Activated naive CD4-positive, alpha-beta T cell treated with anti-CD3 and anti-CD28 coated beads for 36 hours (primary cell): ENCODE measurements at regions of chr17 and their contacts with region 1.

Region 1: GRCh38 chr17:44503147-44504029 is at the start of gene GPATCH8:
- DNase-seq: peak; percentile 95
- H3K4me3 Mint-ChIP-seq: peak within 1 kb of the TSS; percentile 97
- H3K27ac Mint-ChIP-seq: peak within 1 kb of the TSS; percentile 93
- H3K4me1 Mint-ChIP-seq: peaks cover 32% of the 10 kb centered on the region
- H3K27me3 Mint-ChIP-seq: no peaks in the 10 kb centered on the region
- total RNA-seq, gene GPATCH8: 31.5 to 31.7 TPM

Region 2: DNA sequence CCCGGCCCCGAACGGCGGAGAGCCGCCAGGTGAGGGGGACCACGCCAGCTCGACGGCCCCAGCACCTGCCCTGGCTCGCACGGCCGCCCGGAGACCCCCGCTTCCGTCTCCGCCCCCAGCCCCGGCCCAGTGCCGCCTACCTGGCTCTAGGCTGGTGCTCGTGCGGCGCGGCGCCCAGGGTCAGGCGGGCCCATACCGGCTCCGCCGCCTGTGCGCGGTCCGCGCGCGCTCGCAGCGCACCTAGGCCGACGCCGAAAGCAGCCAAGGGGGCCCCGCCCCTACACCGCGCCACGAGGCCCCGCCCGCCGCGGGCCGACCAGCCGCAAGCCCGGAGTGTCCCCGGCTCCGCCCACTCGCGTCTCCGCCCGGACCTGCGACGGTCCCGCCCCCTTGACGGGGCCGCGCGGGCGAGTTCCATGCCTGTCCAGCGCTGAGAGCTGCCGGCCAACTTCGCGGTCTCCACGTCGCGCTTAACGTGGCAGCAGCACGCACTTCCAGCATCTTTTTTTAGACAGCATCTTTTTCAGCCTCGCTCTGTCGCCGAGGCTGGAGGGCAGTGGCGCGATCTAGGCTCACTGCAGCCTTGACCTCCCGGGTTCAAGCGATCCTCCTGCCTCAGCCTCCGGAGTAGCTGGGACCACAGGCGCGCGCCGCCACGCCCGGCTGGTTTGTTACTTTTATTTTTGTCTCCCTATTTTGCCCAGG is 178.7 kb before region 1 on chr17 and contains the start of gene SLC25A39:
- CTCF ChIA-PET with region 1: no interaction called
- intact Hi-C with region 1: no loop called
- DNase-seq: peak; percentile 93
- H3K4me3 Mint-ChIP-seq: peak within 1 kb of the TSS; percentile 87
- H3K27ac Mint-ChIP-seq: peak within 1 kb of the TSS; percentile 87
- H3K4me1 Mint-ChIP-seq: peaks cover 30% of the 10 kb centered on the region
- H3K27me3 Mint-ChIP-seq: no peaks in the 10 kb centered on the region
- total RNA-seq, gene SLC25A39: 146 to 149 TPM

Region 3: GRCh38 chr17:44385287-44386181 is 117.9 kb before region 1 on chr17:
- CTCF ChIA-PET with region 1: no interaction called
- intact Hi-C with region 1: loop called (anchors 5 kb)
- DNase-seq: peak; percentile 92
- H3K4me3 Mint-ChIP-seq: peak overlapping the region; percentile 63
- H3K27ac Mint-ChIP-seq: no peak overlapping the region
- H3K4me1 Mint-ChIP-seq: peaks cover 9% of the 10 kb centered on the region
- H3K27me3 Mint-ChIP-seq: peaks cover 19% of the 10 kb centered on the region

Region 4: GRCh38 chr17:44438636-44439035 is 64.8 kb before region 1 on chr17:
- CTCF ChIA-PET with region 1: no interaction called
- intact Hi-C with region 1: loop called (anchors 5 kb)
- DNase-seq: no peak
- H3K4me3 Mint-ChIP-seq: no peak overlapping the region
- H3K27ac Mint-ChIP-seq: no peak overlapping the region
- H3K4me1 Mint-ChIP-seq: peaks cover 19% of the 10 kb centered on the region
- H3K27me3 Mint-ChIP-seq: no peaks in the 10 kb centered on the region

Region 5: DNA sequence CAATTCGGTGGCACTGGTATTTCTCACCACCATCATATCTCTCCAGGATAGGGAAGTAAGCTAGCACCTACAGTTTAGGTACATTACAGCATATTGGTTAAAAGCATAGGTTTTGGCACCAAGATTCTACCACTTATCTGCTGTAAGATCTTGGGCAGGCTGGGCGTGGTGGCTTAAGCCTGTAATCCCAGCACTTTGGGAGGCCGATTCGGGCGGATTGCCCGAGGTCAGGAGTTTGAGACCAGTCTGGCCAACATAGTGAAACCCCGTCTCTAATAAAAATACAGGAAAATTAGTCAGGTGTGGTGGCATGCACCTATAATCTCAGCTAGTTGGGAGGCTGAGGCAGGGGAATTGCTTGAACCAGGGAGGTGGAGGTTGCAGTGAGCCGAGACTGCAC is 51.6 kb before region 1 on chr17:
- CTCF ChIA-PET with region 1: no interaction called
- intact Hi-C with region 1: no loop called
- DNase-seq: no peak
- H3K4me3 Mint-ChIP-seq: no peak overlapping the region
- H3K27ac Mint-ChIP-seq: no peak overlapping the region
- H3K4me1 Mint-ChIP-seq: peaks cover 10% of the 10 kb centered on the region
- H3K27me3 Mint-ChIP-seq: no peaks in the 10 kb centered on the region

Region 6: GRCh38 chr17:44464037-44464436 is 39.4 kb before region 1 on chr17:
- CTCF ChIA-PET with region 1: no interaction called
- intact Hi-C with region 1: no loop called
- DNase-seq: no peak
- H3K4me3 Mint-ChIP-seq: no peak overlapping the region
- H3K27ac Mint-ChIP-seq: no peak overlapping the region
- H3K4me1 Mint-ChIP-seq: peaks cover 30% of the 10 kb centered on the region
- H3K27me3 Mint-ChIP-seq: no peaks in the 10 kb centered on the region

Region 7: DNA sequence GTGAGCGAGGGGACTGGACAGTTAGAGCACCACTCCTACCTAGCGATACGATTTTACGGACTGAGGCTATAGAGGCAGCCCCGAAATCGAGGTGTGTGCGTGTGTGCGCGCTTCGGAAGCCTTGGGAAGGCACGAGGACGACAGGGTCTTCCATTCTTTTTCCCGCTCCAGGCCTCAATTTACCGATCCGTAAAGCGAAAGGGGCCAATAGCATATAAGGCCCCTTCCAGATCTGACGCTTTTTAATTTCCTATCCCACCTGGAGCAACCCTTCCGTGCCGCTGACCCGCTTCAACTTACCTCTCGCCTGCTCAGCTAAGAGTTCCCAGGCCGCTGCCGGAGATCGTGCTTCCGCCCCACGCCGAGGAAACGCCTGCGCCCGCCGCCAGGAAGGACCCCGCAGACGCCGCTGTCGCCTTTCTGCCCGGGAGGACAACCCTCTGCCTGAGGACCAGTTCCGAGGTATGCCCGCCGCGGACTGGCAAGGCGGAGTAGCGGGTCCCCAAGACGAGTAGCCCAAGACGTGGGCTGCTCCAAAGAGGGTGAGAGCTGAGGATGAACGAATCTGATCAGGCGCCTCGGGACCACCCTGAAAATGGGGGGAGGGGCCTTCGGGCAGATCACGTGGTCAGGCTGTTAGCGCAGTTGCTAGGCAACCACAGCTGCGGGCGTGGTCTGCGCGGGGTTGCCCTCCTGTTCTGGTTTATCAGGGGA is 395.8 kb after region 1 on chr17 and contains the start of gene EFTUD2:
- CTCF ChIA-PET with region 1: no interaction called
- intact Hi-C with region 1: loop called (anchors 2 kb)
- DNase-seq: peak; percentile 94
- H3K4me3 Mint-ChIP-seq: peak within 1 kb of the TSS; percentile 90
- H3K27ac Mint-ChIP-seq: peak within 1 kb of the TSS; percentile 97
- H3K4me1 Mint-ChIP-seq: peaks cover 25% of the 10 kb centered on the region
- H3K27me3 Mint-ChIP-seq: peaks cover 2% of the 10 kb centered on the region
- total RNA-seq, gene EFTUD2: 170 to 176 TPM